AG04449 (cell line): ENCODE measurements at regions of chr13 and their contacts with region 1.

Region 1: DNA sequence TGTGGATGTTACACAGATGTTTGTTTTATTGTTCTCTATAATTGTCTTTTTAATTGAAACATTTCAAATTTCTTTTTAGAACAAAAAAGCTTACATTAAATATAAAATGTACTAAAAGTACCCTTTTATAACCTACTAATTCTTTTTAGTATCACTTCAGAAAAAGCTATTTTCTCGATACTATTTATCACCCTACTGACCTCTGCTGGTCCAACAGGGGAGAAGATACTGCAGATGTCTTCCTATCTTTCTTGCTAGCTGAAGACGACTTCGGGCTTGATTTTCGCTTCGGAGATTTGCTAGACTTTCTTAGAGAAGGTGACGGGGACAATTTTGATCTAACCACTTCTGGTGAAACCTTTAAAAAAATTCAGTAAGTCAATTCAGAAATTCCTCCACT is 42.4 kb downstream of the ZC3H13 start:
- DNase-seq: no peak
- H3K4me3 ChIP-seq: no peak overlapping the region
- CTCF ChIP-seq: peak; percentile 14

Region 2: DNA sequence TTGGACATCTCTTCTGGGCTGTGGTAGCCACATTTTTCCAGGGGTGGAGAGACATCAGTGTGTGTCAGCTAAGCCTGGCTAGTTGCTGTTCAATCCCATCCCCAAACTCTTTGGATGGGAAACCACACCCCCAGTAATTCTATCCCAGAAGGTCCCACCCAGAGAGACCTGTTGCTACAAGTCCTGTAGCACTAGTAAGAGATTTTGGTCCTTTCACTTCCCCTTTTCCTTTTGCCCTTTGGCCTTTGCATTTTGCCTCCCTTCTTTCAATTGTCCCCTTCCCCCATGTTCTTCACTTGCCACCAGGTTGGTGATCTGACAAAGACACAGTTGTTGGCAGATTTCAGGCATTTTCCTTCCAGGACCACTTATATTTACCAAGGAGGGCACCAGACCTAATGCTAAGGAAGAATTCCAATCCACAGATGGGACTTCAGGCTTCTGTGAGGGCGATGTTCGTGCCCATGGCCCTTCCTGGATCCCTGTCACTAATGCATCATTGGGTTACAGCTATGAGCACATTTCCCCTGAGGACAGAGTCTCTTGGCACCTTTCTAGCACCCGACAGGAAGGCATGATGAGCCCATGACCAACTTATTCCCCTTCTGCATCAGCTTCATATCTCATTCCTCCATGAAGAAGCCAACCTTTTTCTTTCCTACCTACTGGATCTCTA is 304.1 kb before region 1 on chr13:
- CTCF ChIA-PET with region 1: no interaction called
- POLR2A ChIA-PET with region 1: no interaction called
- DNase-seq: no peak
- H3K4me3 ChIP-seq: no peak overlapping the region
- CTCF ChIP-seq: no peak

Region 3: GRCh38 chr13:45728759-45729158 is 281.4 kb before region 1 on chr13:
- CTCF ChIA-PET with region 1: no interaction called
- POLR2A ChIA-PET with region 1: no interaction called
- DNase-seq: no peak
- H3K4me3 ChIP-seq: no peak overlapping the region
- CTCF ChIP-seq: no peak

Region 4: GRCh38 chr13:45807520-45808099 is 202.5 kb before region 1 on chr13:
- CTCF ChIA-PET with region 1: interaction called, 12 read pairs
- POLR2A ChIA-PET with region 1: no interaction called
- DNase-seq: no peak
- H3K4me3 ChIP-seq: no peak overlapping the region
- CTCF ChIP-seq: peak; percentile 38

Region 5: GRCh38 chr13:45873491-45874356 is 136.4 kb before region 1 on chr13:
- CTCF ChIA-PET with region 1: no interaction called
- POLR2A ChIA-PET with region 1: no interaction called
- DNase-seq: no peak
- H3K4me3 ChIP-seq: no peak overlapping the region; the same call in 1 of the 2 replicates
- CTCF ChIP-seq: no peak

Region 6: GRCh38 chr13:45994752-45995151 is 15.4 kb before region 1 on chr13:
- CTCF ChIA-PET with region 1: interaction called, 12 read pairs
- POLR2A ChIA-PET with region 1: no interaction called
- DNase-seq: no peak
- H3K4me3 ChIP-seq: no peak overlapping the region
- CTCF ChIP-seq: no peak